PC-3 (cell line): ENCODE measurements at regions of chrX and their contacts with region 1.

Region 1: DNA sequence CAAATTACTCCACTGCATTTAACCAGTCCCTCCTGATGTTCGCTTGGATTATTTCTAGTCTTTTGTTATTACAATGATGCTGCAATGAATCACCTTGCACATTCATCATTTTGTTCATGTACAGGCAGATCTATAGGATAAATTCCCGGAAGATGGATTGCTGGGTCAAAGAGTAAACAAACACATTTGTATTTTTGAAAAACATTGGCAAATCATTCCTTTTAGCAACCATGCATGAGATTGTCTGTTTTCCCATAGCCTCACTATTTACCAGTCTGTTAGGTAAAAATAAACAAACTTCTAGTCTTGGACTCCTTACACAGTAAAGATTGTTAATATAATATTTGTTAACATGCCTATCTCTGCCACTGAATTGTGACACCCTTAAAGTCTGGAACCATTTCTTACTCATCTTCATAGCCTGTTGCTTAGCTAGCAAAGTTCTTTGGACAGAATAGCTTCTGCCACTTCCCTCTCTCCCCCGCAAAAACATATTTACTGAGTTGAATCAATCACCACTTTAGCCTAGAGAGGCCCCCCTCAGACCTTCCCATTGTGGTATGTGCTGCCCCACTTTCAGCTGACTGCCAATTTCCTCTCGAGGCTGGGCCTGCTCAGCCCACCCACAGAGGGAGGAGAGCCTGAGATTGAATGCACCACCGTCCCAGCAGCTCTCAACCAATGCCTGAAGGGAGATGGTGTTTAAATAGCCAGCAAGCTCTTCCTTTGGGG is 108.4 kb upstream of the ATXN3L start:
- DNase-seq: peak; percentile 88
- ATAC-seq: peak; percentile 82
- H3K4me3 ChIP-seq: peak overlapping the region; percentile 32; the same call in 1 of the 2 replicates
- H3K27ac ChIP-seq: peak overlapping the region; percentile 95
- H3K4me1 ChIP-seq: peaks cover 30% of the 10 kb centered on the region
- H3K27me3 ChIP-seq: no peaks in the 10 kb centered on the region
- CTCF ChIP-seq: no peak

Region 2: GRCh38 chrX:13101441-13102139 is 326.6 kb before region 1 on chrX:
- CTCF ChIA-PET with region 1: no interaction called
- POLR2A ChIA-PET with region 1: no interaction called
- intact Hi-C with region 1: loop called (anchors 5 kb)
- DNase-seq: peak; percentile 91
- ATAC-seq: peak; percentile 98
- H3K4me3 ChIP-seq: 0 out of 2 replicates have a peak overlapping the region, but pooled peaks have one; percentile 4
- H3K27ac ChIP-seq: peak overlapping the region; percentile 94
- H3K4me1 ChIP-seq: peaks cover 44% of the 10 kb centered on the region
- H3K27me3 ChIP-seq: no peaks in the 10 kb centered on the region
- CTCF ChIP-seq: no peak

Region 3: GRCh38 chrX:13398073-13398823 is 30.0 kb before region 1 on chrX:
- CTCF ChIA-PET with region 1: no interaction called
- POLR2A ChIA-PET with region 1: no interaction called
- intact Hi-C with region 1: loop called (anchors 1 kb)
- DNase-seq: peak; percentile 97
- ATAC-seq: peak; percentile 93
- H3K4me3 ChIP-seq: no peak overlapping the region
- H3K27ac ChIP-seq: peak overlapping the region; percentile 95
- H3K4me1 ChIP-seq: peaks cover 30% of the 10 kb centered on the region
- H3K27me3 ChIP-seq: no peaks in the 10 kb centered on the region
- CTCF ChIP-seq: no peak